ENCODE measurements at regions of chr18 and their contacts with region 1.

Region 1: DNA sequence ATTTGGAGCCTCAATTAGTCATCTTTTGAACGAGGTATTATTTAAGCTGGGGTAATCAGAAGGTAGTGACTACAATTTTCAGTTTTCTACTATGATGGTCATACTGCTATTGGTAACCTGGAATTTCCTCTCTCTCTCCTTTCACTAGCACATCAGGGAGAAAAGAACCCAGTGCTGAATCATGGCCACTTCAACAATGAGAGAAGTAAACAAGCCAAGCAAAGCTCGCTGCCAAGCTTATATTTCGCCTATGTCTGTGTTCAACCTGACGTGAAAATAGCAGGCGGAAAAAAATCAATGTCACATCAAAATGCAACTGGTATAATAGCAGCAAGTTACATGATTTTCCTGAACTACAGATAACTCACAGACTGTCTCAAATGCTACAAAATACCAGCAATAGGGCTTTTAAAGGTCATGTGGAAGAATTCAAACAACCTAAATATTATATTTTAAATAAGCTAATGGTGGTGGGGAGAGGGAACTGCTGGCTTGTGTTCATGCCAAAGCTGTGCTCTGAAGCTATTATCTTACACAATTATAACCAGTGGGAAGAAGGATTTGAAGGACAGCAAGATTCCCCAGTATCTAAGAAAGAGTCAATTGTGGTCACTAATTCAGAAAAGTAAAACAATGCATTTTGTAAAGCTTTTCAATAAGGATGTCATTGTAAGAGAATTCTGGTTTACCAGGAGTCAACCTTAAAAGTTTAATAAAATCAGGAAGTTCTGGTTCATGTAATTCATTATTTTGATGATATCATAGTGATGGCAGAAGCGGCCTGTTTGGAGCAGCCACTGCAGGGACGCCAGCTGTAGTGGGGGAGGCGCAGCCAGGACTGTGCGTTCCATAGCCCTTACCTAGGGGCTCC is 38.0 kb downstream of the RNF152 start:
- DNase-seq: peak; percentile 47
- H3K4me3 ChIP-seq: no peak overlapping the region
- H3K27ac ChIP-seq: no peak overlapping the region
- H3K4me1 ChIP-seq: peaks cover 35% of the 10 kb centered on the region
- H3K27me3 ChIP-seq: no peaks in the 10 kb centered on the region
- CTCF ChIP-seq: no peak

Region 2: GRCh38 chr18:61921621-61922235 is 66.9 kb after region 1 on chr18:
- CTCF ChIA-PET with region 1: no interaction called
- dilution Hi-C with region 1: loop called (anchors 5 kb)
- in situ Hi-C with region 1: no loop called
- intact Hi-C with region 1: no loop called
- DNase-seq: no peak
- H3K4me3 ChIP-seq: no peak overlapping the region
- H3K27ac ChIP-seq: no peak overlapping the region
- H3K4me1 ChIP-seq: no peaks in the 10 kb centered on the region
- H3K27me3 ChIP-seq: no peaks in the 10 kb centered on the region
- CTCF ChIP-seq: no peak